ENCODE measurements at regions of chr1 and their contacts with region 1.

Region 1: GRCh38 chr1:11147197-11147770 is 41.9 kb upstream of the ANGPTL7 start:
- DNase-seq: no peak
- ATAC-seq: no peak

Region 2: GRCh38 chr1:9399510-9400424 is 1747.5 kb before region 1 on chr1:
- intact Hi-C with region 1: no loop called
- DNase-seq: no peak
- ATAC-seq: no peak

Region 3: DNA sequence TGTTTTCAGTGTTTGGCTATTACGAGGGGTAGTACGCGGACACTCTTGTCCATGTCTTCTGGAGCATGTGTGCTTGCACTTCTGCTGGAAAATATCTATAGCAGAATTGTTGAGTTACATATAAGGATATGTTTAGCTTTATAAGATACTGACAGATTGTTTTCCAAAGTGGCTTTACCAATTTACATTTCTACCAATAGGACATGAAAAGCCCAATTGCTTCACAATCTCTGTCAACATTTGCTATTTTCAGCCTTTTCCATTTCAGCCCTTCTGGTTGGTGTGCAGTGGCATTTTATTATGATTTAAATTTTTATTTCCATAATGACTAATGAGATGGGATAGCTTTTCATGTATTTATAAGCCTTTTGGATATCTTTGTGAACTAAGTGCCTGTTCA is 35.6 kb after region 1 on chr1:
- intact Hi-C with region 1: loop called (anchors 1 kb)
- DNase-seq: no peak
- ATAC-seq: no peak

Region 4: GRCh38 chr1:11434506-11434905 is 287.2 kb after region 1 on chr1:
- intact Hi-C with region 1: no loop called
- DNase-seq: no peak
- ATAC-seq: no peak

Measured in sciatic nerve (tissue), 2 donors.